Activated CD4-positive, alpha-beta T cell treated with anti-CD3 and anti-CD28 coated beads for 36 hours (primary cell): ENCODE measurements at regions of chr13 and their contacts with region 1.

Region 1: DNA sequence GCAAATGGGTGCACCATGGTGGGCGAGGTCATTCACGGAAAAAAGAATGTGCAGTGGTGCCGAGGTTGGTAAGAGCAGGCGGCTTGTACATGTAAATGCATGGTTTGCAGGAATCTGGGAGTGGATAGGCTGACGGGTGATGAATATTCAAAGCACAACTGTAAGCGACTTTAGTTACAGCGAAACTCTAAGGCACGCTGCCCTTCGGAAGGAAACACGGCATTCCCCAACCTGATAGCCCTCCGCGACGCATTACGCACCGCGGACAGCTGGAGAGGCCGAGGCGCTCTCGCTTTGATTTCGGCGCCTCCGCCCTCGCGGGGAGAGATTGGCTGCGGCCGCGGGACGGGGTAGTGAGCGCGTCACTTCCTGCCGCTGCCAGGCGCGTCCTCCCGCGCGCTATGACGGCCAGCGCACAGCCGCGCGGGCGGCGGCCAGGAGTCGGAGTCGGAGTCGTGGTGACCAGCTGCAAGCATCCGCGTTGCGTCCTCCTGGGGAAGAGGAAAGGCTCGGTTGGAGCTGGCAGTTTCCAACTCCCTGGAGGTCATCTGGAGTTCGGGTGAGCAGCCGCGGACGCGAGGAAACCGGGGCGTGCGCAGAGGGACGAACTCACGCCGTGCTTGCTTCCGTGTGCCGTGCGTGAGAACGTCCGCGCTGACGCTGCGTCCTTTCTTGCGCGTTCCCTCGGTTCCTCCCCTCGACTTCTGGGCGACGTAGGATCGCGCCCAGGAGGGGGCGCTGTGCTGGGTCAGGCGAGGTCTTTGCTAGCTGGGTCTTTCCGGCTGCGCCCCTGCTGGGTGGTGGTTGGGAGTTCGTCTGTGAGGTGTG is at the start of gene NUDT15:
- DNase-seq: peak; percentile 98
- ATAC-seq: peak; percentile 89
- H3K4me3 Mint-ChIP-seq: peak within 1 kb of the TSS; percentile 97
- H3K27ac Mint-ChIP-seq: peak within 1 kb of the TSS; percentile 96
- H3K4me1 Mint-ChIP-seq: peaks cover 34% of the 10 kb centered on the region
- H3K27me3 Mint-ChIP-seq: no peaks in the 10 kb centered on the region
- total RNA-seq, gene NUDT15: 12.3 to 18.2 TPM

Region 2: GRCh38 chr13:46796515-46797474 is 1240.8 kb before region 1 on chr13 and contains the start of gene ESD:
- CTCF ChIA-PET with region 1: no interaction called
- POLR2A ChIA-PET with region 1: no interaction called
- intact Hi-C with region 1: loop called in 1 of 2 experiments (anchors 2 kb)
- DNase-seq: peak; percentile 97
- ATAC-seq: peak; percentile 95
- H3K4me3 Mint-ChIP-seq: peak within 1 kb of the TSS; percentile 98
- H3K27ac Mint-ChIP-seq: peak within 1 kb of the TSS; percentile 98
- H3K4me1 Mint-ChIP-seq: peaks cover 38% of the 10 kb centered on the region
- H3K27me3 Mint-ChIP-seq: no peaks in the 10 kb centered on the region
- total RNA-seq, gene ESD: 150 to 162 TPM

Region 3: GRCh38 chr13:47017476-47017875 is 1020.1 kb before region 1 on chr13:
- CTCF ChIA-PET with region 1: no interaction called
- POLR2A ChIA-PET with region 1: no interaction called
- intact Hi-C with region 1: no loop called
- DNase-seq: no peak
- ATAC-seq: no peak
- H3K4me3 Mint-ChIP-seq: no peak overlapping the region
- H3K27ac Mint-ChIP-seq: no peak overlapping the region
- H3K4me1 Mint-ChIP-seq: no peaks in the 10 kb centered on the region
- H3K27me3 Mint-ChIP-seq: no peaks in the 10 kb centered on the region

Region 4: DNA sequence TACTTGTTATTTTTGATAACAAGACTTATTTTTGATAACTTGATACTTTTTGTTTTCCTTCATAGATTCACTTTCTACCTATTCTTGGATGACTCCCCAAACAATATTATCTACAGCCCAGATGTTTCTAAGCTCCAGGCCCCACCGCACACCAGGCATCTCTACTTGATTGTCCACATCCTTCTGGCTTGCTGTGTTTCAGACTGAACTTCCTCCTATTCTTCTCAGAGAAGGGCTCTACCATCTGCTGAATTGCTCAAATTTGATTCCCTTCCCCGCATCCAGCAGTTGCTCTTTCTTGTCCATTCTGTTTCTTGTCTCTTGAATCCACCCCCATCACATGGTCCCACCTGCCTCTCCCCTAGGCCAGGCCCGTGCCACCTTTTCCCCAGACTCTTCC is 13.0 kb after region 1 on chr13:
- CTCF ChIA-PET with region 1: interaction called, 30 read pairs
- POLR2A ChIA-PET with region 1: no interaction called
- intact Hi-C with region 1: no loop called
- DNase-seq: no peak
- ATAC-seq: no peak
- H3K4me3 Mint-ChIP-seq: no peak overlapping the region
- H3K27ac Mint-ChIP-seq: no peak overlapping the region
- H3K4me1 Mint-ChIP-seq: no peaks in the 10 kb centered on the region
- H3K27me3 Mint-ChIP-seq: no peaks in the 10 kb centered on the region

Region 5: DNA sequence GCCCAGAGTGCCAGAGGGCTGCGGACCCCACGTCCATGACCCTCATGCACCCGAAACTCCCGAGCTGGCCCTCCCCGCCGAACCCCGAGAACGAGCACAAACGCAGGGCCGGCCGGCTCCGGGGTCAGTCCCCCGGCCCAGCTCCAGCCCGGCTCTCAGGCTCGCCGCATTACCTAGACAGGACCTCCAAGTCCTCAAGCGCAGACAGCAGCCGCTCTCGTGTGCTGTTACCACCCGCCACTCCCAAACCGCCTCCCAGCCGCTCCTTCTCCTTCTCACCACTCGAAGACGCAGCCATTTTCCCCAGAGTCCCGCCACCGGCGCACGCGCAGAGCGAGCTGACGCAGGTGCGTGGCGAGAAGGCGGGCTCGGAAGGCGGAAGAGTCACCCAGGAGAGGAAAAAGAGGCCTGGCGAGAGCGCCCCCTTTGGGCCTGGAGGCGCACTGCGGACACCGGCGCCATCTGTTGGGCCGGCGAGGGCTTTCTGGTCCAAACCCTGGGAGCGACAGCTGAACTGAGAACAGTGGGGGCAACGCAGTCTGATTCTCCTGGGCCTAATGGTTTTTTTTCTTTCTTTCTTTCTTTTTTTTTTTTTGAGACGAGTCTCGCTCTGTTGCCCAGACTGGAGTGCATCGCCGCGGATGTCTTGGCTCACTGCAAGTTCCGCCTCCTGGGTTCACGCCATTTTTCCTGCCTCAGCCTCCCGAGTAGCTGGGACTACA is 57.4 kb after region 1 on chr13 and contains the start of gene MED4:
- CTCF ChIA-PET with region 1: interaction called, 21 read pairs
- POLR2A ChIA-PET with region 1: no interaction called
- intact Hi-C with region 1: loop called (anchors 1 kb)
- DNase-seq: peak; percentile 98
- ATAC-seq: peak; percentile 97
- H3K4me3 Mint-ChIP-seq: peak within 1 kb of the TSS; percentile 97
- H3K27ac Mint-ChIP-seq: peak within 1 kb of the TSS; percentile 92
- H3K4me1 Mint-ChIP-seq: peaks cover 29% of the 10 kb centered on the region
- H3K27me3 Mint-ChIP-seq: no peaks in the 10 kb centered on the region
- total RNA-seq, gene MED4: 53.5 to 62.7 TPM

Region 6: GRCh38 chr13:48233046-48233907 is 195.7 kb after region 1 on chr13 and contains the start of gene ITM2B:
- CTCF ChIA-PET with region 1: interaction called, 4 read pairs
- POLR2A ChIA-PET with region 1: interaction called, 3 read pairs
- intact Hi-C with region 1: loop called (anchors 2 to 5 kb)
- DNase-seq: peak; percentile 78
- ATAC-seq: peak; percentile 71
- H3K4me3 Mint-ChIP-seq: peak within 1 kb of the TSS; percentile 84
- H3K27ac Mint-ChIP-seq: peak within 1 kb of the TSS; percentile 89
- H3K4me1 Mint-ChIP-seq: peaks cover 56% of the 10 kb centered on the region
- H3K27me3 Mint-ChIP-seq: peaks cover 2% of the 10 kb centered on the region
- total RNA-seq, gene ITM2B: 67.0 to 96.5 TPM

Region 7: GRCh38 chr13:48400850-48401291 is 363.3 kb after region 1 on chr13:
- CTCF ChIA-PET with region 1: no interaction called
- POLR2A ChIA-PET with region 1: no interaction called
- intact Hi-C with region 1: loop called in 1 of 2 experiments (anchors 5 kb)
- DNase-seq: no peak
- ATAC-seq: peak; percentile 21
- H3K4me3 Mint-ChIP-seq: no peak overlapping the region
- H3K27ac Mint-ChIP-seq: peak overlapping the region; percentile 1
- H3K4me1 Mint-ChIP-seq: peaks cover 53% of the 10 kb centered on the region
- H3K27me3 Mint-ChIP-seq: no peaks in the 10 kb centered on the region

Region 8: DNA sequence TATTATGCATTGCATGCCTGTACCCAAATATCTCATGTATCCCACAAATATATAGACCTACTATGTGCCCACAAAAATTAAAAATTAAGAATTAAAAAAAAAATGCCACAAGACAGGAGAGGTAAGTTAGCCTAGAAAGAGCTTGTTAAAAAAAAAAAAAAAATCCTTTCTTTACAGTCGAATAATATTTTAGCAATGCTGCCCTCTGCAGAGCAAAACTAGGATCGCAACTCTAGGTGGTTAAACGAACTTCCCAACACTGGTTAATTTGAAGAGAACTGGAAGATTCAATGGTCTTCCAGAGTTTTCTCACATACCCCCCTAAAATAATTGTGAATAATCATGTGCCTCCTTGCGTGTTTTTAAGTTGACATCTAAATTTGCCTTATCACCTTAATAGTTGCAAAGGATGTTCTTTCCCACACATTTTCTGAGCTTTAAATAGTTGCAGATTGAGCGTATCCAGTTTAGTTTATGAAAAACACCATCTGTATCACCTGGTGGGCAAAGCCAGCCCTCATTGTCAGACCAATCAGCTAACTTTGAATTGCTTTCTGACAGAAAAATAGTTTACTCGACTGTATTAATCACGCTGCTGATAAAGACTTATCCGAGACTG is 542.7 kb after region 1 on chr13:
- CTCF ChIA-PET with region 1: no interaction called
- POLR2A ChIA-PET with region 1: interaction called, 8 read pairs
- intact Hi-C with region 1: loop called in 1 of 2 experiments (anchors 2 kb)
- DNase-seq: peak; percentile 81
- ATAC-seq: no peak
- H3K4me3 Mint-ChIP-seq: no peak overlapping the region
- H3K27ac Mint-ChIP-seq: no peak overlapping the region
- H3K4me1 Mint-ChIP-seq: no peaks in the 10 kb centered on the region
- H3K27me3 Mint-ChIP-seq: peaks cover 16% of the 10 kb centered on the region